ENCODE measurements at regions of chr4 and their contacts with region 1.

Region 1: GRCh38 chr4:122658818-122659295 is 38.0 kb upstream of the IL21 start:
- DNase-seq: peak; percentile 20
- ATAC-seq: peak; percentile 95
- H3K4me3 ChIP-seq: no peak overlapping the region
- H3K27ac ChIP-seq: peak overlapping the region; percentile 61
- H3K4me1 ChIP-seq: peaks cover 6% of the 10 kb centered on the region; the same call in 1 of the 2 replicates
- H3K27me3 ChIP-seq: no peaks in the 10 kb centered on the region
- CTCF ChIP-seq: no peak
- EP300 ChIP-seq: no peak
- POLR2A ChIP-seq: no peak
- RAD21 ChIP-seq: no peak

Region 2: DNA sequence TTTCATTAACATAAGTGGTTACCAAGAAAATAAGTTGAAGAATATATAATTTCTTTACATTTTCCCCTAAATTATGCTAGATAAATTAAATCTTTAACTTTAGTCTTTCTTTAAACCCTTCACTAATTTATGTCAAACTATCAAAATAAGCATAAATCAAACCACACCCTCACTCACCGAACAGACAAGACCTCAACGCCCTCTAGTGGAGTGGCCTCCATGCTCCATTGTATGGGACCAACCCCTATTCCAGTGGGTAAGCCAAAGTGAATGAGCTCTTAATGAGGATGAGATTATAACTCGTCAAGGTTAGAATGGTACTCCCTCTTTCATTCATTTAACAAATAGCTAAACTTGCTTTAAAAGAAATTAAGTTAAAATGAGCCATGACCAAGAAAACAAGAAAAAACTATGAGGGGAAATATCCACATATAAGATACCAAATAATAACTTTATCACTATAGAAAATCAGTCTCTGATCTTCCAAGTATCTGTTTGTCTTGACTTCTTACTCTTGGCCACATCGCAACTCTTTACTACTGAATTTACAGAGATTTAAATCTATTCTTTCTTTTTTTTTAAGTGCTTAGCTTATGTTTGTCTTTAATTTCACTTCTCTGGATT is 58.1 kb after region 1 on chr4:
- CTCF ChIA-PET with region 1: interaction called, 4 read pairs
- POLR2A ChIA-PET with region 1: no interaction called
- RAD21 ChIA-PET with region 1: no interaction called
- SMC1A ChIA-PET with region 1: interaction called, 4 read pairs
- in situ Hi-C with region 1: no loop called
- intact Hi-C with region 1: loop called (anchors 5 kb)
- DNase-seq: no peak
- ATAC-seq: peak; percentile 97
- H3K4me3 ChIP-seq: no peak overlapping the region
- H3K27ac ChIP-seq: no peak overlapping the region
- H3K4me1 ChIP-seq: peaks cover 2% of the 10 kb centered on the region; the same call in 1 of the 2 replicates
- H3K27me3 ChIP-seq: no peaks in the 10 kb centered on the region; a peak in 1 of 4 replicates
- CTCF ChIP-seq: peak; percentile 85 to 87 (median 87)
- EP300 ChIP-seq: no peak
- POLR2A ChIP-seq: no peak
- RAD21 ChIP-seq: peak; percentile 85

Measured in GM12878 (cell line).